ENCODE measurements at regions of chr6 and their contacts with region 1.

Region 1: DNA sequence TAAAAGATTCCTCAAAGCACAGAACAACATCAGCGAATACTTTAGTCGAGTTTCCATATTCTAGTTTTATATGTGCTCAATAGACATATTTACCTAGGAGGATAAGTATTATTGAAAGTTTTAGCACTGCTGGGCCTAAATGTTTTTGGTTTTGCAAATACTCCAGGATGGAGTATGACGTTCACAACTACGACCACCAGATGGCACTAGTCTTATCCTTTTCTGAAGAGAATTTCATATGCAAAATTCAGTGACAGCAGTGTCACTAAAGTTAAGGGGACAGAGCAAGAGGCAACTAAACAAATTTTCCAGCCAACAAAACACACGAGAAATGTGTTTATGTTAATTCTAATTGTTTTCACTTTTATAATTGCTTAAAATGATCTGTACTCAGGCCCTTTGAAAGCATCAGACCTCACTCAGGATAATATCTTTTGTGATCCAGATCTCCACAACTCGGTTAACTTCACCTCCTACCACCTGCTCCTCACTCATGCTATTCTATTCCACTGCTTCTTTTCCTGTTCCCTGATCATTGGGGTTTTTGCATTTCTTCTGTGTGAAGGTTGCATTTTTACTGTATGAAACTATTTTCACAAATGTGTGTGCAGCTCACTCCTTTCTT is 220.8 kb downstream of the TRDN start:
- DNase-seq: no peak
- ATAC-seq: peak; percentile 46 to 80 (median 72)
- H3K4me3 ChIP-seq: no peak overlapping the region
- H3K27ac ChIP-seq: peak overlapping the region; percentile 13
- H3K4me1 ChIP-seq: peaks cover 74% of the 10 kb centered on the region
- H3K27me3 ChIP-seq: no peaks in the 10 kb centered on the region
- CTCF ChIP-seq: peak; percentile 66

Region 2: DNA sequence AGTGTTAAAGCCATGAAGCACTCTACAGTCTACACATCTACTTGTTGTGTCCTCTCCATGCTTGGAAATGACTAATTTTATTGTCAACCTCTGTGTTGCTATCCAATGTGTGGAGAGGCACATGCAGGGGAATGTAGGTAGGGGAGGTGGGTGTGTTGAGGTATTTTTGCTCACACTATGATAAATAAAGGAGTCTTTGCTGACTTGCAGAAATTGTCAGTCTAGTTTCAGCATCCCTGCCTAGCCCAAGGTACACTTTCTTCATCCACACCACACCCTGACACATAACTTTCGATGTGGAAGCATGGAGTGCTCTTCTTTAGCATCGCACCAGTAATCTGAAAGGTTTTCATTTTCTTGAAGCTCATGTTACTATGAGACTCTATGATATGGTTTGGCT is 43.2 kb before region 1 on chr6:
- intact Hi-C with region 1: no loop called
- DNase-seq: no peak
- ATAC-seq: no peak
- H3K4me3 ChIP-seq: no peak overlapping the region
- H3K27ac ChIP-seq: no peak overlapping the region
- H3K4me1 ChIP-seq: no peaks in the 10 kb centered on the region
- H3K27me3 ChIP-seq: no peaks in the 10 kb centered on the region
- CTCF ChIP-seq: no peak

Region 3: DNA sequence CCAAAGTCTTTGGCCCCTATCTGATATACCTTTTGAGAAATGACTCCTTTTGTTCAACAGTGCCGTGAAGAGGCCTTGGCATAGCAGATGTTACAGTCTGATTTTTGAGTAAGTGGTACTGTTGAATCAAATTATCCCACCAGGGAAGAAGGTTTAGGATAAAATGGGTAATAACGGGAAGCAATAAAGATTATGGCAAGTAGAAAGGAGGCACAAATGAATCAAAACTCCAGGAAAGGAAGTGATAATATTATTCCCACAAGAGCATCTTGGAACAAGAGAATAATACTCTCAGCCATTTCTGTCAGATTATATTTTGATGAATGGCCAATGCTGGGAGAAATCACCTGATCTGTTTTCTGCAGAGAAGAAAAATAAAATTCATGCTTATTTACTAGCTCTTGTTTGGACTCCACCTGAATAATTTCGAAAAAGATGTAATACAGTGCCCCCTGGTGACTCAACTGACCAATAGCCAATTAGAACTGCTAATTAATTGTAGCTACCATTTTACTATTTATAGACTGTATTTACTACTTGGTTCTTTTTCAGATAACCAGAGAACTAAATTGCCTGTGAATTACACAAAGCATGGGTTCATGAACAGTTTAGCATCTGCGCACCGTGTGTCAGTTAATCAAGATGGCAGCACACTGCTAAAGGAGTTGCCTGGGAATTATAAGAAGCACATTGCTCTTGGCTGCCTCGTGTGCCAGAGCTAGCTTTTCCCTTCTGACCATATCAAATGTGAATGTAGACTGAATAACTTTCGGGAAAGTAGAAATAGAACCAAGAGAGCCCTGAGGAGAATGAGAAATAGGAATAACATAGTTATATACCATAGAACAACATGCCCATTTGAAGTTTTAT is 299.3 kb after region 1 on chr6:
- intact Hi-C with region 1: loop called (anchors 5 kb)
- DNase-seq: no peak
- ATAC-seq: peak; percentile 68 to 87 (median 75)
- H3K4me3 ChIP-seq: peak overlapping the region; percentile 42
- H3K27ac ChIP-seq: peak overlapping the region; percentile 67
- H3K4me1 ChIP-seq: peaks cover 6% of the 10 kb centered on the region
- H3K27me3 ChIP-seq: no peaks in the 10 kb centered on the region
- CTCF ChIP-seq: peak; percentile 72